ENCODE measurements at regions of chr22 and their contacts with region 1.

Region 1: DNA sequence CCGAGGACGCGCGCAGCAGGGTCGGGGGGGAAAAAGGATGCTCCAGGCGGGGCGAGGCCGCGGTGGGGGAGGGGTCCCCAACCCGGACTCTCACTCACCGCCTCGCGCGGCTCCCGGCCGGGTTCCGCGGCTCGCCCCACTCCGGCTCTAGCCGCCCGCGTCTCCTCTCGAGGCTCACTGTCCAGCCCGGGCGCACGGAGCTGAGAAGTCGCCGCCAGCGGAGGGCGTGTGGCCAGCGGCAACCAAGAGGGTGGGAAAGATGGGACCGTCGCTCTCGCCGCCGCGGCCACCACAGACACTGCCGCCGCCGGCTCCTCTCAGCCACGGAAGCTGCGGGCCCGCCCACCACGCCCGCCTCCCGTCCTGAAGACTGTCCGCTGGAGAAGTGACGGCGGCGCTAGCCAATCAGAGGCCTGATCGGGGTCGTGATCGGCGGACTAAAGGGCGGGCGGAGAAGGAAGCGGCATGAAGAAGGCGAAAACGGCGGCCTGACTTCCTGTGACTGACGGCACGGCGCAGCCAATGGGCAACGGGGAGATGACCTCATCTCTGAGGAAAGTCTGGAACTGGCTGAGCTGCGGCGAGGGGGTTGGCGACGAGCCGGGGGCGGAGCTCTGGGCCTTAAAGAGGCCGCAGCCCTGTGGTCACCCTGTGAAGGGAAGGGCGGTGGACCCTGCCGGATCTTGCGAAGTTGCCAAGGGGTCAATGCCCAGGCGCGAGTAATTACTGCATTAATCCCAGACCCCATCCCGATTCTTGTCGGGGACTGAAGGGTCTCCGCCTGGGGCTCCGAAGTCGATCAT is at the start of gene MRTFA:
- DNase-seq: peak; percentile 100
- H3K4me3 ChIP-seq: peak within 1 kb of the TSS; percentile 72 to 88 (median 87)
- H3K27ac ChIP-seq: peak within 1 kb of the TSS; percentile 69
- H3K4me1 ChIP-seq: peaks cover 21% of the 10 kb centered on the region
- H3K27me3 ChIP-seq: no peaks in the 10 kb centered on the region
- CTCF ChIP-seq: no peak
- POLR2A ChIP-seq: peak; percentile 81
- total RNA-seq, gene MRTFA: 44.1 and 48.6 TPM in 2 replicates

Region 2: GRCh38 chr22:40533712-40534378 is 102.7 kb before region 1 on chr22:
- CTCF ChIA-PET with region 1: interaction called, 7 read pairs
- POLR2A ChIA-PET with region 1: no interaction called
- dilution Hi-C with region 1: loop called (anchors 10 kb)
- intact Hi-C with region 1: no loop called
- DNase-seq: peak; percentile 52
- H3K4me3 ChIP-seq: no peak overlapping the region
- H3K27ac ChIP-seq: no peak overlapping the region
- H3K4me1 ChIP-seq: peaks cover 18% of the 10 kb centered on the region
- H3K27me3 ChIP-seq: no peaks in the 10 kb centered on the region
- CTCF ChIP-seq: no peak
- POLR2A ChIP-seq: no peak

Region 3: GRCh38 chr22:40605676-40606250 is 30.8 kb before region 1 on chr22:
- CTCF ChIA-PET with region 1: no interaction called
- POLR2A ChIA-PET with region 1: no interaction called
- dilution Hi-C with region 1: no loop called
- intact Hi-C with region 1: no loop called
- DNase-seq: no peak
- H3K4me3 ChIP-seq: no peak overlapping the region
- H3K27ac ChIP-seq: no peak overlapping the region
- H3K4me1 ChIP-seq: peaks cover 7% of the 10 kb centered on the region
- H3K27me3 ChIP-seq: no peaks in the 10 kb centered on the region
- CTCF ChIP-seq: no peak
- POLR2A ChIP-seq: no peak

Region 4: DNA sequence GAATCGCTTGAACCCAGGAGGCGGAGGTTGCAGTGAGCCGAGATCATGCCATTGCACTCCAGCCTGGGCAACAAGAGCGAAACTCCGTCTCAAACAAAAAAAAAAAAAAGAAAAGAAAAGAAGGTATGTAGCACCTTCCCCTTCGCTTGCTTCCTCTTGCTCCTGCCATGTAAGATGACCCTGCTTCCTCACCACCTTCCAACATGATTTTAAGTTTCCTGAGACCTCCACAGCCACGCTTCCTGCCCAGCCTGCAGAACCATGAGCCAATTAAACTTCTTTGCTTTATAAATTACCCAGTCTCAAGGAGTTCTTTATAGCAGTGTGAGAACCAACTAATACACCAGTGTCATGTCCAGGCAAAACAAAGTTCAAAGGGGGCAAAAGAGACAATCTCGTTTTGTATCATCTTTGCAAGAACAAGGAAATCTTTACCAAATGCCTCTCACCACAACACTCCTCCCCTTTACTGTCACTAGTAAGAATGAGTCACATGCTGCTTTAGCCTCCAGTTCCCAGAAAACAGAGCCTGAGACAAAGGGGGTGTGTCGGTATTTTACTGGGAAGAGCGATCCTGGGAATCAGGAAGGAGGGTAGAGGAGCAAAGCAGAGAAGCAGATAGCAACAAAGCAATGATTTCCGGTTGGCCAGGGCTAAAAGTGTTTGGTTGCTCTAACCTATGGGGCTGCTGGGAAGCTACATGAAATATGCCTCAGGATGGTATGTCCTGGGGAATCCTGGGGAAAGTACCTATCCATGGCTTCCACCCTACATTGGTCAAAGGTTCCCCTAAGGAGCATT is 32.2 kb after region 1 on chr22:
- CTCF ChIA-PET with region 1: no interaction called
- POLR2A ChIA-PET with region 1: no interaction called
- dilution Hi-C with region 1: no loop called
- intact Hi-C with region 1: no loop called
- DNase-seq: peak; percentile 82
- H3K4me3 ChIP-seq: no peak overlapping the region
- H3K27ac ChIP-seq: no peak overlapping the region
- H3K4me1 ChIP-seq: peaks cover 10% of the 10 kb centered on the region
- H3K27me3 ChIP-seq: no peaks in the 10 kb centered on the region
- CTCF ChIP-seq: no peak
- POLR2A ChIP-seq: no peak